ENCODE measurements at regions of chr15 and their contacts with region 1.

Region 1: GRCh38 chr15:41634072-41634626 is 26.1 kb upstream of the MGA start:
- DNase-seq: no peak
- H3K4me3 ChIP-seq: no peak overlapping the region
- H3K27ac ChIP-seq: no peak overlapping the region
- H3K4me1 ChIP-seq: no peaks in the 10 kb centered on the region
- H3K27me3 ChIP-seq: no peaks in the 10 kb centered on the region
- CTCF ChIP-seq: no peak
- POLR2A ChIP-seq: no peak

Region 2: GRCh38 chr15:41557673-41558399 is 76.3 kb before region 1 on chr15:
- intact Hi-C with region 1: no loop called
- DNase-seq: peak; percentile 70 to 87 (median 80)
- H3K4me3 ChIP-seq: peak overlapping the region in 1 of 4 donors; percentile 88
- H3K27ac ChIP-seq: peak overlapping the region in 3 of 5 donors; percentile 27 to 72 (median 39)
- H3K4me1 ChIP-seq: peaks cover 9 to 22% of the 10 kb centered on the region in 2 donors
- H3K27me3 ChIP-seq: no peaks in the 10 kb centered on the region
- CTCF ChIP-seq: peak; percentile 69 to 88 (median 80)
- POLR2A ChIP-seq: no peak

Region 3: DNA sequence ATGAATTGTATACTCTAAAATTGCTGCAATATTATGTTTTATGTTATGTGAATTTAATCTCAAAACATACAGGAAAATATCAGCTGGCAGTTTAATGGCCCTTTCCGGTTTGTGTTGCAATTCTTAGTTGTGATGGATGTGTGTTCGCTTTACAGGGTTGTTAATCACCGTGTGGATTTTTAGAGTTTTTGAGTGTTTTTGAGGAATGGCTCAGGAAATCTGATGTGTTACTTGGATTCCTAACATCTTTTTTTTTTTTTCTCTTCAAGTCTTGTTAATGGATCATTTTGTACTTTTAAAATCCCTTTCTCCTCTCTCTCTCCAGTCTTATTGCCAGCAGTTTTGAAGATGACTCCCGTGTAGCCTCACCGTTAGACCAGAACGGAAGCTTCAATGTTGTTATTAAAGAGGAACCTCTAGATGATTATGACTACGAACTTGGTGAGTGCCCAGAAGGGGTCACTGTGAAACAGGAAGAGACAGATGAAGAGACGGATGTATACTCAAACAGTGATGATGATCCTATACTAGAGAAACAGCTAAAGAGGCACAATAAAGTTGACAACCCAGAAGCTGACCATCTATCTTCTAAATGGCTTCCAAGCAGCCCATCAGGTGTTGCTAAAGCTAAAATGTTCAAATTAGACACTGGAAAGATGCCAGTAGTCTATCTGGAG is 61.7 kb after region 1 on chr15:
- intact Hi-C with region 1: loop called in 1 of 2 experiments (anchors 10 kb)
- DNase-seq: peak in 4 of 7 donors; percentile 23 to 45 (median 39)
- H3K4me3 ChIP-seq: no peak overlapping the region
- H3K27ac ChIP-seq: no peak overlapping the region
- H3K4me1 ChIP-seq: peaks cover 13 to 34% of the 10 kb centered on the region in 2 donors
- H3K27me3 ChIP-seq: no peaks in the 10 kb centered on the region
- CTCF ChIP-seq: peak in 3 of 6 experiments; percentile 13 to 33 (median 17)
- POLR2A ChIP-seq: no peak

Region 4: GRCh38 chr15:41827880-41828806 is 194.0 kb after region 1 on chr15 and contains the start of gene JMJD7:
- intact Hi-C with region 1: no loop called
- DNase-seq: peak; percentile 95 to 98 (median 96)
- H3K4me3 ChIP-seq: peak within 1 kb of the TSS; percentile 30 to 83 (median 59)
- H3K27ac ChIP-seq: peak within 1 kb of the TSS in 4 of 5 donors; percentile 80 to 93 (median 85)
- H3K4me1 ChIP-seq: peaks cover 7 to 13% of the 10 kb centered on the region in 2 donors
- H3K27me3 ChIP-seq: no peaks in the 10 kb centered on the region
- CTCF ChIP-seq: peak in 1 of 6 experiments; percentile 10
- POLR2A ChIP-seq: peak; percentile 40 to 88
- total RNA-seq, gene JMJD7: 4.0 to 20.6 (median 11.6) TPM

Region 5: DNA sequence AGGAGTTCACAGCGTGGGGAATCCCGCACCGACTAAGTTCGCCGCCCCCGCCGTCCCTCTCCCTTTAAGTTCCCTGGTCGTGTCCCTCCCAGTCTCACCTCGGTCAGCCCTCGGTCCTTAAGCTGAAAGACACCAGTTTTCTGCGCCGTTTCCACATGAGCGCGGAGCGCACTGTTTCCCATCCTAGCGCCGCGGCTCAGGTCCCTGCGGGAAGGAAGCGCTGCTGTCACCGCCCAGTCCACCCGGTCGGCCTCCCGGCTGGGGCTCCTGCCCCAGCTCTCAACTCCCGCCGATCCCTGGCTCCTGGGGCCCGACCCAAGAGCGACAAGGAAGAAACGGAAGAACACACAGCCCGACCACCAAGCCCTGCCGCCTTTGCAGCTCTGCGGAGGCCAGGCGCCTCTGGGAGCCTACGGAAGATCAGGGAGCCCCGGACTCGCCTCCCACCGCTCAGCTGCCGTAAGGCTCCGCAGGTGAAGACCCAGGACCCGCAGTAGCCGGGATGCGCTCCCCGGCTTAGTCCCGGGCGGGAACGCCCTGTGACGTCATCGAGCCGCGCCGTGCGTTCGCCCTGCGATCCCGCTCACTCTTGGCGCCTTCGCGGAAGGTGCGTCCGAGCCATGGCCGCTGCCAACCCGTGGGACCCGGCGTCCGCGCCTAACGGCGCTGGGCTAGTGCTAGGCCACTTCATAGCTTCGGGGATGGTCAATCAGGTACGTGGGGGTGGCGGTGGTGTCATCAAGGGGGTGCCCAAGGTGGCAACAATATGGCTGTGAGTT is 914.3 kb after region 1 on chr15 and contains the starts of genes HAUS2 and LRRC57:
- intact Hi-C with region 1: no loop called
- DNase-seq: peak; percentile 79 to 92 (median 89)
- H3K4me3 ChIP-seq: peak within 1 kb of the TSS; percentile 83 to 100 (median 88)
- H3K27ac ChIP-seq: peak within 1 kb of the TSS; percentile 67 to 94 (median 85)
- H3K4me1 ChIP-seq: peaks cover 6 to 44% of the 10 kb centered on the region in 2 donors
- H3K27me3 ChIP-seq: no peaks in the 10 kb centered on the region
- CTCF ChIP-seq: peak in 1 of 6 experiments; percentile 6
- POLR2A ChIP-seq: peak; percentile 67 to 79
- total RNA-seq, gene HAUS2: 13.0 to 57.9 (median 19.0) TPM
- total RNA-seq, gene LRRC57: 7.1 to 26.2 (median 17.9) TPM